Right ventricle myocardium superior (tissue), 1 donor: ENCODE measurements at regions of chrX and their contacts with region 1.

Region 1: GRCh38 chrX:71178908-71179307 is 34.3 kb downstream of the NLGN3 start:
- DNase-seq: peak; percentile 43
- ATAC-seq: peak; percentile 48

Region 2: GRCh38 chrX:70970482-70970995 is 208.4 kb before region 1 on chrX:
- intact Hi-C with region 1: loop called (anchors 10 kb)
- DNase-seq: no peak
- ATAC-seq: no peak

Region 3: GRCh38 chrX:71253253-71254091 is 74.6 kb after region 1 on chrX:
- intact Hi-C with region 1: no loop called
- DNase-seq: peak; percentile 47
- ATAC-seq: no peak